Naive thymus-derived CD4-positive, alpha-beta T cell (primary cell): ENCODE measurements at regions of chr2 and their contacts with region 1.

Region 1: GRCh38 chr2:7437716-7438632 is 520.8 kb downstream of the RNF144A start:
- DNase-seq: no peak
- ATAC-seq: peak; percentile 27
- H3K4me3 ChIP-seq: peak overlapping the region; percentile 4
- H3K4me3 Mint-ChIP-seq: peak overlapping the region in 6 of 10 donors; percentile 19 to 65 (median 37)
- H3K27ac ChIP-seq: no peak overlapping the region
- H3K27ac Mint-ChIP-seq: peak overlapping the region in 7 of 9 donors; percentile 4 to 89 (median 60)
- H3K4me1 ChIP-seq: peaks cover 7 to 46% of the 10 kb centered on the region in 2 donors
- H3K4me1 Mint-ChIP-seq: peaks cover 4 to 72% (median 54%) of the 10 kb centered on the region in 7 donors
- H3K27me3 ChIP-seq: no peaks in the 10 kb centered on the region
- H3K27me3 Mint-ChIP-seq: no peaks in the 10 kb centered on the region

Region 2: GRCh38 chr2:7467782-7468447 is 29.9 kb after region 1 on chr2:
- CTCF ChIA-PET with region 1: no interaction called
- POLR2A ChIA-PET with region 1: no interaction called
- intact Hi-C with region 1: loop called in 1 of 2 experiments (anchors 2 kb)
- DNase-seq: peak in 7 of 9 donors; percentile 23 to 68 (median 44)
- ATAC-seq: peak; percentile 85
- H3K4me3 ChIP-seq: no peak overlapping the region
- H3K4me3 Mint-ChIP-seq: peak overlapping the region in 4 of 10 donors; percentile 35 to 66 (median 52)
- H3K27ac ChIP-seq: no peak overlapping the region
- H3K27ac Mint-ChIP-seq: peak overlapping the region; percentile 50 to 94 (median 78)
- H3K4me1 ChIP-seq: no peaks in the 10 kb centered on the region
- H3K4me1 Mint-ChIP-seq: peaks cover 9 to 41% (median 26%) of the 10 kb centered on the region in 7 donors
- H3K27me3 ChIP-seq: no peaks in the 10 kb centered on the region
- H3K27me3 Mint-ChIP-seq: no peaks in the 10 kb centered on the region